Uterus (tissue), 4 donors: ENCODE measurements at regions of chr9 and their contacts with region 1.

Region 1: GRCh38 chr9:97468658-97469448 is 32.6 kb upstream of the TMOD1 start:
- DNase-seq: peak; percentile 80 to 85
- H3K4me3 ChIP-seq: no peak overlapping the region
- H3K27ac ChIP-seq: peak overlapping the region; percentile 45 to 71
- H3K4me1 ChIP-seq: no peaks in the 10 kb centered on the region
- H3K27me3 ChIP-seq: no peaks in the 10 kb centered on the region
- CTCF ChIP-seq: peak; percentile 84 to 95 (median 90)
- POLR2A ChIP-seq: no peak

Region 2: GRCh38 chr9:97425973-97426336 is 42.9 kb before region 1 on chr9:
- intact Hi-C with region 1: no loop called
- DNase-seq: no peak
- H3K4me3 ChIP-seq: no peak overlapping the region
- H3K27ac ChIP-seq: no peak overlapping the region
- H3K4me1 ChIP-seq: no peaks in the 10 kb centered on the region
- H3K27me3 ChIP-seq: no peaks in the 10 kb centered on the region
- CTCF ChIP-seq: no peak
- POLR2A ChIP-seq: no peak

Region 3: DNA sequence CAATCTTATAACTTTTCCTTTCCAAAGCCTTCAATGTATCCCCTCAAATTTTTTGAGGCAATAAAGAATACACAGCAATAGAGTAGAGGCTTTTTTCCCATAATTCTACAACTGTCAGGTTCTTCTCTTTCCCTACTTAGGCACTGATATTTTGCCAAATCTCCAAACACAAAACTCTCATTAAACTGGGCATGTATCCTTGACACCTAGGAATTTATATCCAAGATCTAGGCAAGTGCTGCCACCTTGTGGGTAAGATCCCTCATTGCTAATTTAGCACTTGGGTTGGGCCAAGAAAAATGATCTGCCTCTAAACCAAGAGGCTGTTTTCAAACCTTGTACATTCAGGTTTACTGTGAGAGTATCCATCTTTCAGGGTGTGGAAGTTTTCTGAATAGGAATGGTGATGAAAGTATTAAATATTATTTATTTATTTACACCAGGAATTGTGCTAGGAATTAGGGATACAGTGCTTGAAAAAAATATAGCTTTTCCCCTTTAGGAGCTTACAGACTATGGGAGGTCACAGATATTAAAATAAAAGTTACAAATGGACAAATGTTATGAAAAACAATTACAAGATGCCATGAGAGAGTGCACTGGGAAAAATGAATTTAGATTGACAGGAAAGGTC is 146.7 kb after region 1 on chr9:
- intact Hi-C with region 1: loop called (anchors 5 kb)
- DNase-seq: peak; percentile 49 to 78
- H3K4me3 ChIP-seq: no peak overlapping the region
- H3K27ac ChIP-seq: no peak overlapping the region
- H3K4me1 ChIP-seq: no peaks in the 10 kb centered on the region
- H3K27me3 ChIP-seq: no peaks in the 10 kb centered on the region
- CTCF ChIP-seq: peak; percentile 75 to 94 (median 83)
- POLR2A ChIP-seq: no peak